B cell (primary cell): ENCODE measurements at regions of chr13 and their contacts with region 1.

Region 1: GRCh38 chr13:95834134-95834765 is 157.3 kb downstream of the DNAJC3 start:
- DNase-seq: peak; percentile 71
- ATAC-seq: peak; percentile 81
- H3K4me3 ChIP-seq: no peak overlapping the region
- H3K4me3 Mint-ChIP-seq: no peak overlapping the region
- H3K27ac ChIP-seq: no peak overlapping the region
- H3K27ac Mint-ChIP-seq: no peak overlapping the region
- H3K4me1 ChIP-seq: no peaks in the 10 kb centered on the region
- H3K4me1 Mint-ChIP-seq: peaks cover 2% of the 10 kb centered on the region
- H3K27me3 ChIP-seq: no peaks in the 10 kb centered on the region
- H3K27me3 Mint-ChIP-seq: no peaks in the 10 kb centered on the region
- CTCF ChIP-seq: peak; percentile 98

Region 2: DNA sequence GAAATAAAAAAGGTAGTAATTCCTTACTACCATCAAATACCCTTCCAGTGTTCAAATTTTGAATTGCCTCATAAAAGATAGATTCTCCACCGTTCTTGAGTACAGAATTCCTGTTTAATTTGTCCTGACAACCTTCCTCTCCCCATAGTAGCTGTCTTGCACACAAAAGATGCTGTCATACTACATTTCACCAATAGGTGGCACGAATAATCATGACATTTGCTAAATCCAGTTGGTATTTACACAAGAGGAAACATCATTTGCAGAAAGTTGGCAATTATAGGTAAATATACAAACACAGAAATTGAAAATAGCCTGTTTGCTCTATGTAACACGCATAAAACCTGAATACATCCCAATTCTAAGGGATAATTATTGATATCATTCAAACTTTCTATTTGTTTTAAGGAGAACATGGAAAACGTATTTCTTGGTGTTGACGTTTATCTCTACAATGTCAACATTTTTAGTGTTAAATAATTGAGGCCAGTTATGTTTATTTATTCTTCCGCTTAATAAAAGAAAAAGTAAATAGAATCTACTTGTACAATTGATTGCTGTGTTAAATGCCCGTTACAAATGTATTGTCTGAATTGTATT is 340.1 kb before region 1 on chr13:
- CTCF ChIA-PET with region 1: interaction called, 36 read pairs
- POLR2A ChIA-PET with region 1: no interaction called
- intact Hi-C with region 1: loop called (anchors 1 kb)
- DNase-seq: peak; percentile 45
- ATAC-seq: no peak
- H3K4me3 ChIP-seq: no peak overlapping the region
- H3K4me3 Mint-ChIP-seq: no peak overlapping the region
- H3K27ac ChIP-seq: no peak overlapping the region
- H3K27ac Mint-ChIP-seq: no peak overlapping the region
- H3K4me1 ChIP-seq: no peaks in the 10 kb centered on the region
- H3K4me1 Mint-ChIP-seq: no peaks in the 10 kb centered on the region
- H3K27me3 ChIP-seq: no peaks in the 10 kb centered on the region
- H3K27me3 Mint-ChIP-seq: peaks cover 24% of the 10 kb centered on the region
- CTCF ChIP-seq: peak; percentile 85

Region 3: GRCh38 chr13:95536632-95537241 is 297.5 kb before region 1 on chr13:
- CTCF ChIA-PET with region 1: interaction called, 56 read pairs
- POLR2A ChIA-PET with region 1: no interaction called
- intact Hi-C with region 1: no loop called
- DNase-seq: no peak
- ATAC-seq: no peak
- H3K4me3 ChIP-seq: no peak overlapping the region
- H3K4me3 Mint-ChIP-seq: no peak overlapping the region
- H3K27ac ChIP-seq: no peak overlapping the region
- H3K27ac Mint-ChIP-seq: no peak overlapping the region
- H3K4me1 ChIP-seq: no peaks in the 10 kb centered on the region
- H3K4me1 Mint-ChIP-seq: no peaks in the 10 kb centered on the region
- H3K27me3 ChIP-seq: no peaks in the 10 kb centered on the region
- H3K27me3 Mint-ChIP-seq: peaks cover 30% of the 10 kb centered on the region
- CTCF ChIP-seq: peak; percentile 58

Region 4: DNA sequence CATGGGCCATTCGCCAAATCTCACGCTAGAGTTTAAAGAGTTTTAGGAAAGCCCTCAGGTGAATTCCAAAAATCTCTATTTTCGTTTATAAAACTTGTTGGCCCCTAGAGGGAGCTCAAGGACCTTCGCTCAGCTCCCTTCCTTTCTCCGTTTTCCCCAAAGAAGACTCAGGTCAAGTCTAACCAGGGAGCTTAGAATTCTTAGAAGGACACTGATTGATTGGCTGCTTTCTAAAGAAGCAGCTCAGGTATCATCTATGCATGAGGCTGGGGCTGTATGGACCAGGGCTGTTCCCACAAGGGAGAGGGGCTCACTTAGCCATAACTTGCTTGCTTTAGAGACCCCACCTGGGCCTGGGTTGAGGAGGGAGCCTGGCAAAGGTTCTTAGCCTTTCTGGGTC is 210.2 kb before region 1 on chr13:
- CTCF ChIA-PET with region 1: interaction called, 163 read pairs
- POLR2A ChIA-PET with region 1: no interaction called
- intact Hi-C with region 1: loop called (anchors 1 kb)
- DNase-seq: peak; percentile 43
- ATAC-seq: no peak
- H3K4me3 ChIP-seq: no peak overlapping the region
- H3K4me3 Mint-ChIP-seq: no peak overlapping the region
- H3K27ac ChIP-seq: no peak overlapping the region
- H3K27ac Mint-ChIP-seq: no peak overlapping the region
- H3K4me1 ChIP-seq: no peaks in the 10 kb centered on the region
- H3K4me1 Mint-ChIP-seq: no peaks in the 10 kb centered on the region
- H3K27me3 ChIP-seq: peaks cover 0 to 6% (median 2%) of the 10 kb centered on the region in 4 experiments
- H3K27me3 Mint-ChIP-seq: peaks cover 13% of the 10 kb centered on the region
- CTCF ChIP-seq: peak; percentile 72

Region 5: GRCh38 chr13:95822303-95822702 is 11.9 kb before region 1 on chr13:
- CTCF ChIA-PET with region 1: interaction called, 23 read pairs
- POLR2A ChIA-PET with region 1: no interaction called
- intact Hi-C with region 1: no loop called
- DNase-seq: no peak
- ATAC-seq: no peak
- H3K4me3 ChIP-seq: no peak overlapping the region
- H3K4me3 Mint-ChIP-seq: no peak overlapping the region
- H3K27ac ChIP-seq: no peak overlapping the region
- H3K27ac Mint-ChIP-seq: no peak overlapping the region
- H3K4me1 ChIP-seq: no peaks in the 10 kb centered on the region
- H3K4me1 Mint-ChIP-seq: no peaks in the 10 kb centered on the region
- H3K27me3 ChIP-seq: peaks cover 0 to 4% (median 0%) of the 10 kb centered on the region in 4 experiments
- H3K27me3 Mint-ChIP-seq: no peaks in the 10 kb centered on the region
- CTCF ChIP-seq: no peak